PC-9 (cell line): ENCODE measurements at regions of chrX and their contacts with region 1.

Region 1: DNA sequence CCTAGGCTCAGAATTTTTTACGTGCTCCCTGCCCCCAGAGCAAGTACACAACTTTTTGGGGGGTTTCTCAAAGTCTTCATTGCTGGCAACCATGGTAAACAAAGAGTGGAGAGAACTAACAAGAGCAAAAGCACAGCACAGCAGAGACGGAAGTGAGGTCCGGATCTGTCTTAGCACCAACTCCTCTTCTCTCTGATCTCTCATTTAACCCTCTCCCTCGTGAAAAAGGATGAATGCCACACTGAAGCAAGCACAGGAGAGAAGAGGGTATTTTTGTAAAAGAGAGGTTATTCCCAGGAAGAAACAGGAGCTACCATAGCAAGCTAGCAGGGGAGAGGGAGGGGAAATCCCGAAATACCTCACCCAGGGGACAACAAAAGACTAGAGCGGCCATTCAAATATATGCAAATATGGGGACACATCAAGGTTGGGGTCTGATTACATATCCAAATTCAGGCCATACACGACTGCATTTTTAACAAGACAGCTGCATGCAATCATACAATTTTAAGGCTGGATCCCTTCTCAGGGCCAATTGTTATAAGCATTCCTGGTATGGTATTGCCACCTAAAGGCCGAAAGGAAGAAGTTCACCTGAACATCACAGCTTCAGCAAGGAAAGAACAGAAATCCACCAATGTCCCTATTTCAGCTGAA is 46.6 kb downstream of the CD40LG start:
- DNase-seq: peak in 1 of 2 experiments; percentile 57
- H3K4me3 ChIP-seq: no peak overlapping the region
- H3K27ac ChIP-seq: no peak overlapping the region
- H3K4me1 ChIP-seq: peaks cover 17% of the 10 kb centered on the region
- H3K27me3 ChIP-seq: no peaks in the 10 kb centered on the region
- CTCF ChIP-seq: peak; percentile 90

Region 2: GRCh38 chrX:136162831-136163570 is 531.6 kb before region 1 on chrX:
- CTCF ChIA-PET with region 1: no interaction called
- POLR2A ChIA-PET with region 1: no interaction called
- intact Hi-C with region 1: loop called (anchors 5 kb)
- DNase-seq: peak; percentile 56 to 57
- H3K4me3 ChIP-seq: no peak overlapping the region
- H3K27ac ChIP-seq: no peak overlapping the region
- H3K4me1 ChIP-seq: peaks cover 18% of the 10 kb centered on the region
- H3K27me3 ChIP-seq: no peaks in the 10 kb centered on the region
- CTCF ChIP-seq: peak; percentile 83

Region 3: DNA sequence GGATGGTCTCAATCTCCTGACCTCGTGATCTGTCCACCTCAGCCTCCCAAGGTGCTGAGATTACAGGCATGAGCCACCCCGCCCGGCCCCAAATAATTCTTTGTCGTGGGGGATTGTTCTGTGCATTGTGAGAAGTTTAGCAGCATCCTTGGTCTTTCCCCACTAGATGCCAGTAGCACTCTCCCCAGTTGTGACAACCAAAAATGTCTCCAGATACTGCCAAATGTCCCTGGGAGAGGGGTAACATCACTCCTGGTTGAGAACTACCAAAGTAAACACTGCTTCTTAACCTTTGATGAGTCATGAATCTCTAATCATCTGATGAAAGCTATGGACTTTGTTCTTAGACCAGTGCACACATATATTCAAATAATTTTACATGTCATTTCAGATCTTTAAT is 297.6 kb before region 1 on chrX:
- CTCF ChIA-PET with region 1: no interaction called
- POLR2A ChIA-PET with region 1: no interaction called
- intact Hi-C with region 1: loop called (anchors 10 kb)
- DNase-seq: peak; percentile 14 to 86
- H3K4me3 ChIP-seq: no peak overlapping the region
- H3K27ac ChIP-seq: peak overlapping the region; percentile 32
- H3K4me1 ChIP-seq: peaks cover 33% of the 10 kb centered on the region
- H3K27me3 ChIP-seq: no peaks in the 10 kb centered on the region
- CTCF ChIP-seq: peak; percentile 53

Region 4: DNA sequence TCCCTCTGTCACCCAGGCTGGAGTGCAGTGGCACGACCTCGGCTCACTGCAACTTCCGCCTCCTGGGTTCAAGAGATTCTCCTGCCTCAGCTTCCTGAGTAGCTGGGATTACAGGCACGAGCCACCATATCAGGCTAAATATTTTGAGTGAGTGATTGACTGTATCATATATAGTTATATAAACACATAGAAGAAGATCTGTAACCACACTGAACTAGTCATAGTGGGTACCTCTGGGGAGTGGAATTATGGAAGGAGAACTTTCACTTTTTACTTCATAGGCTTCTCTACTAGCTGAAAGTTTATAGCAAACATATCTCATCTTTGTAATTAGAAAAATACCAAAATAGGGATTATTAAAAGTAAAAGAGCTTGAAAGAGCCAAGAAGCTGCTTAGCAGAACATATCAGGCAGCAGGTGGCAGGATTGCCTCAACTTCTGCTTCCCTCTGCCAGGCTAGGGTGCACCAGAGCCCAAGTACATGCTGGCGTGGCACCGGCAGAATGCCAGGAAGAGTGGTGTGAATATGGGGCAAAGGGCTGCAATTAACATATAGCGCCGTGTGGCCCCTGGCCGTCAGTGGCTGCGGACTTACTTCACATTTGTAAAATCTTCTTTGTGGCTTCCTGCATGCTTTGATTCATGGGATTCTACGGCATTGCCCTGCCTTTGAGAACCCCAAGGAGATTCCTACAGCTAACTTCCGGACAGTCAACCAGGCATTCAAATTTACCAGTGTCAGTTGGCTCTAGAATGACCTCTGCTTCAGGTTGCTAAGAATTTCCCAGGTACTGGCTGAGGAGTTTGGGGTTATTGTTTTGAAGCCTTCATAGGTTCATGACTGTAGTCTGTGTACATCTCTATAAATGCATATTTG is 86.0 kb before region 1 on chrX:
- CTCF ChIA-PET with region 1: no interaction called
- POLR2A ChIA-PET with region 1: no interaction called
- intact Hi-C with region 1: loop called (anchors 5 kb)
- DNase-seq: peak in 1 of 2 experiments; percentile 13
- H3K4me3 ChIP-seq: no peak overlapping the region
- H3K27ac ChIP-seq: no peak overlapping the region
- H3K4me1 ChIP-seq: no peaks in the 10 kb centered on the region
- H3K27me3 ChIP-seq: no peaks in the 10 kb centered on the region
- CTCF ChIP-seq: peak; percentile 56